Mucosa of descending colon (tissue), 3 donors: ENCODE measurements at regions of chr4 and their contacts with region 1.

Region 1: GRCh38 chr4:57110640-57111511 is 691 bp upstream of the IGFBP7 start:
- DNase-seq: peak in 2 of 3 donors; percentile 41 to 46
- ATAC-seq: peak; percentile 55
- H3K4me3 ChIP-seq: no peak overlapping the region
- H3K4me1 ChIP-seq: peaks cover 10% of the 10 kb centered on the region
- CTCF ChIP-seq: no peak

Region 2: GRCh38 chr4:56552273-56552672 is 558.6 kb before region 1 on chr4:
- intact Hi-C with region 1: no loop called
- DNase-seq: no peak
- ATAC-seq: no peak
- H3K4me3 ChIP-seq: no peak overlapping the region
- H3K4me1 ChIP-seq: no peaks in the 10 kb centered on the region
- CTCF ChIP-seq: no peak

Region 3: DNA sequence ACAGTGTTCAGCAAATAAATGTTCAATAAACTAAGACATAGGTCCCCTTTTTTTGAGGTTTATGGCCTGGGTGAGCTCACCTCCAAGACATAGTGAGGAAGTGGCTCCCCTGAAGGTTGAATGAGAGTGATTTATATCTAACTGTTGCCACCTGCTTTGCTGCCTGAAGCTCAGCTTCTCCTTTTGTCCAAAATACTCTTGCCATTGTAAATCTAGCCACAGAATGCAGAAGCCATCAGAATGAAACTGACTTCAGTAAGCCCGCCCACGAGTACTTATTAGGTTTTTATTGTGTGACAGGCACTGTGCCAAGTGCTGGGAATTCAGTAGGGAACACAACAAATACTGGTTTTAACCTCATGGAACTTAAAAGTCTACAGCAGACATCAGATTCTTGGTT is 307.4 kb before region 1 on chr4:
- intact Hi-C with region 1: no loop called
- DNase-seq: peak in 1 of 3 donors; percentile 21
- ATAC-seq: peak; percentile 21
- H3K4me3 ChIP-seq: no peak overlapping the region
- H3K4me1 ChIP-seq: no peaks in the 10 kb centered on the region
- CTCF ChIP-seq: no peak

Region 4: DNA sequence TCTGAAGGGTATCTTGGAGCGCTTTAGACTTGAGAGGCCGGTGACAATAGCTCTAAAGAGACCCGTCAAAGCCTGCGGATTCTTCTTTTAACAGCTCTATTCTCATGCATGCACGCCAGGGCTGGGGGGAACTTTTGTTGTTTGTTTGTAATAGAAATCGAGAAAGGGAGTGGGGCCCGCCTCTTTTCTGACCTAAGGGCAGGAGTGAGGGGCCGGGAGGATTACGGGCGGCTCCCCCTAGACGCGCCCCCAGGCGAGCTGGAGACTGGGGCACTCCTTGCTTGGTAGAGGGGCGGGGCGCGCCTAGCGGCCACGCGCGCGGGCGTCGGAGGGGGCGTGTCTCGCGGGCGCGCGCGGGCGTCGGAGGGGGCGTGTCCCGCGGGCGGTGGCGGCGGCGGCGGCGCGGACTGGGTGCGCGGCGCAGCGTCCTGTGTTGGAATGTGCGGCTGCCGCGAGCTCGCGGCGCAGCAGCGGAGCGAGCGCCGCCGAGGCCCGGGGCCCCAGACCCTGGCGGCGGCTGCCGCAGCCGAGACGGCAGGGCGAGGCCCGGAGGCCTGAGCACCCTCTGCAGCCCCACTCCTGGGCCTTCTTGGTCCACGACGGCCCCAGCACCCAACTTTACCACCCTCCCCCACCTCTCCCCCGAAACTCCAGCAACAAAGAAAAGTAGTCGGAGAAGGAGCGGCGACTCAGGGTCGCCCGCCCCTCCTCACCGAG is 203.2 kb before region 1 on chr4 and contains the start of gene REST:
- intact Hi-C with region 1: loop called in 1 of 2 experiments (anchors 10 kb)
- DNase-seq: peak; percentile 84 to 90 (median 88)
- ATAC-seq: peak; percentile 88
- H3K4me3 ChIP-seq: peak within 1 kb of the TSS; percentile 95
- H3K4me1 ChIP-seq: peaks cover 15% of the 10 kb centered on the region
- CTCF ChIP-seq: no peak
- total RNA-seq, gene REST: 26.8 to 37.6 (median 28.4) TPM

Region 5: DNA sequence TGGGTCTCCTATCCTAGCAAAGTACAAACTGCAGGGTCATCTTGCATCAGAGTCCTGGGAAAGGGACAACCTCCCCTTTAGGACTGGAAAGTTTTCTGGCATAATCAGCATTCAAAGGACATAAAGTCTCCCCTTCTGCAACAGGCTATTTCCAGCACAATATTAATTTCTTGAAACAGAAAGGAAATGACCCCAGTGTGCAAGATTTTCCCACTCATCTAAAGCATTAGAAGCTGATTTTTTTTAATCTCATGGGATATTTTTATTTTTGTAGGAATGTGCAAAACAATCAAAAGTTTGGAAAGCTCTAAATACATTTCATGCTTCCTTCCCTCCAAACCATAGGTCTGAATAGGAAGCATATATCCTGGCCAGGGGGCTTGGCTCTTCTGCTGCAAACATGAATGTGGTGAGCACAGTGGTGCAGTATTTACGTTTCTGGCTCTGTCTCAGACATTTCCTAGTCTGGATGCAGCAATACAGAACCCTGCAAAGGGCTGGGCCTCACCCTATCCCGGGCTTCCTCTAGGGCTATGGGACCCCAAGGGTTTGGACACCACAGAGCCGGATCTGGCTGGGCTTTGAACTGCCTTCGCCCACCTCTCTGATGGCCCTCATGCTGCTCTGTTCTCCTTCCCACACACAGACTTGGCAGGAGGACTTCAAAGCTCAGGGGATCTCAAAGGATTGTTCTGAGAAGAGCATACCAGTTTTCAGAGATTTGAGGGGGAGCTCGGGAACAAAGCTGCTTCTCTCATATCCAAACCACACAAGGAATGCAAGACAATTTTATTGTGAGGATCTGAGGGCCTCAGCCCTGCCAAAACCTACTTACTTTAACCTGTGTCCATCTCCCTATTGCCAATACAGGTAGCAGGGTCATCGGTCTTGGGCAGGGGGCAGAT is 67.3 kb before region 1 on chr4:
- intact Hi-C with region 1: loop called in 1 of 2 experiments (anchors 10 kb)
- DNase-seq: no peak
- ATAC-seq: no peak
- H3K4me3 ChIP-seq: no peak overlapping the region
- H3K4me1 ChIP-seq: no peaks in the 10 kb centered on the region
- CTCF ChIP-seq: no peak

Region 6: GRCh38 chr4:57158221-57158620 is 47.3 kb after region 1 on chr4:
- intact Hi-C with region 1: no loop called
- DNase-seq: peak in 1 of 3 donors; percentile 3
- ATAC-seq: no peak
- H3K4me3 ChIP-seq: no peak overlapping the region
- H3K4me1 ChIP-seq: no peaks in the 10 kb centered on the region
- CTCF ChIP-seq: no peak

Region 7: GRCh38 chr4:57182132-57182874 is 71.4 kb after region 1 on chr4:
- intact Hi-C with region 1: no loop called
- DNase-seq: peak in 1 of 3 donors; percentile 7
- ATAC-seq: no peak
- H3K4me3 ChIP-seq: no peak overlapping the region
- H3K4me1 ChIP-seq: no peaks in the 10 kb centered on the region
- CTCF ChIP-seq: no peak